ENCODE measurements at regions of chr9 and their contacts with region 1.

Region 1: GRCh38 chr9:94065535-94065961 is 18.7 kb upstream of the PTPDC1 start:
- DNase-seq: peak; percentile 44 to 82 (median 76)
- ATAC-seq: peak; percentile 64
- H3K4me3 ChIP-seq: no peak overlapping the region
- H3K4me3 Mint-ChIP-seq: no peak overlapping the region
- H3K27ac ChIP-seq: no peak overlapping the region
- H3K27ac Mint-ChIP-seq: no peak overlapping the region
- H3K4me1 ChIP-seq: no peaks in the 10 kb centered on the region
- H3K4me1 Mint-ChIP-seq: peaks cover 2% of the 10 kb centered on the region
- H3K27me3 ChIP-seq: no peaks in the 10 kb centered on the region
- H3K27me3 Mint-ChIP-seq: no peaks in the 10 kb centered on the region
- CTCF ChIP-seq: peak; percentile 85

Region 2: GRCh38 chr9:94014065-94014654 is 51.4 kb before region 1 on chr9:
- CTCF ChIA-PET with region 1: interaction called, 10 read pairs
- POLR2A ChIA-PET with region 1: no interaction called
- intact Hi-C with region 1: no loop called
- DNase-seq: peak in 2 of 9 experiments; percentile 24 to 35
- ATAC-seq: no peak
- H3K4me3 ChIP-seq: no peak overlapping the region
- H3K4me3 Mint-ChIP-seq: no peak overlapping the region
- H3K27ac ChIP-seq: no peak overlapping the region
- H3K27ac Mint-ChIP-seq: no peak overlapping the region
- H3K4me1 ChIP-seq: peaks cover 18% of the 10 kb centered on the region
- H3K4me1 Mint-ChIP-seq: peaks cover 17% of the 10 kb centered on the region
- H3K27me3 ChIP-seq: no peaks in the 10 kb centered on the region
- H3K27me3 Mint-ChIP-seq: no peaks in the 10 kb centered on the region
- CTCF ChIP-seq: peak; percentile 51

Region 3: GRCh38 chr9:94084314-94084713 is 18.8 kb after region 1 on chr9 and contains the start of gene PTPDC1:
- CTCF ChIA-PET with region 1: interaction called, 24 read pairs
- POLR2A ChIA-PET with region 1: no interaction called
- intact Hi-C with region 1: no loop called
- DNase-seq: no peak
- ATAC-seq: no peak
- H3K4me3 ChIP-seq: no peak within 1 kb of the TSS
- H3K4me3 Mint-ChIP-seq: no peak within 1 kb of the TSS
- H3K27ac ChIP-seq: no peak within 1 kb of the TSS
- H3K27ac Mint-ChIP-seq: no peak within 1 kb of the TSS
- H3K4me1 ChIP-seq: no peaks in the 10 kb centered on the region
- H3K4me1 Mint-ChIP-seq: no peaks in the 10 kb centered on the region
- H3K27me3 ChIP-seq: no peaks in the 10 kb centered on the region
- H3K27me3 Mint-ChIP-seq: no peaks in the 10 kb centered on the region
- CTCF ChIP-seq: no peak
- total RNA-seq, gene PTPDC1: 2.1 to 2.2 TPM

Region 4: GRCh38 chr9:94603259-94604160 is 538.0 kb after region 1 on chr9:
- CTCF ChIA-PET with region 1: no interaction called
- POLR2A ChIA-PET with region 1: no interaction called
- intact Hi-C with region 1: loop called in 1 of 2 experiments (anchors 10 kb)
- DNase-seq: peak; percentile 33 to 71 (median 64)
- ATAC-seq: peak; percentile 80
- H3K4me3 ChIP-seq: no peak overlapping the region
- H3K4me3 Mint-ChIP-seq: no peak overlapping the region
- H3K27ac ChIP-seq: no peak overlapping the region
- H3K27ac Mint-ChIP-seq: no peak overlapping the region
- H3K4me1 ChIP-seq: peaks cover 5% of the 10 kb centered on the region
- H3K4me1 Mint-ChIP-seq: peaks cover 6% of the 10 kb centered on the region
- H3K27me3 ChIP-seq: no peaks in the 10 kb centered on the region
- H3K27me3 Mint-ChIP-seq: peaks cover under 1% of the 10 kb centered on the region
- CTCF ChIP-seq: peak; percentile 55